ENCODE measurements at regions of chr9 and their contacts with region 1.

Region 1: DNA sequence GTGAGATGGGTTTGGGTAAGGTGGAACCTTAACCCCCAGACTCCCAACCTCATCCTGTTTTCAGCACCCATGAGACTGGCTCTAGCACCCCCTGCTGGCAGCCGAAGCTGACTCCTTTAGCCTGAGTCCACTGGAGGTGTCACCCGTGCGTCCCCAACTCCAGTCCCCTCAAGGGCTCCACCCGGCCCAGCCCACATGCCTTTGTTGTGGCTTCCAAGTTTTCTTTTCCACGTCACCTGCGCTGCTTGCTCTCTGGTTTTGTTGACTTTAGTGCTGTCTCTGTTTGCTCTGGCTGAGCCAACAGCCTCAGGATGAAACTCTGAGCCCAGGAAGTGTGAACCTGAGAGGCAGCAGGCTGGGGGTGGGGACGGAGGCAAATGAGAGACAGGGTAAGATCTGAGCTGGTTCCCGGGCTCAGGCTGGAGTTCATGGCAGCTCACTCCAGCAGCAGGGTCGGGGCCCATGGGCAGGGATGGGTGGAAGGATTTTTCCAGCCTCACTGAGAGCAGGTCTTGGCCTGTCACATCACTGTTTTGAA is 13.2 kb upstream of the AQP7 start:
- DNase-seq: peak; percentile 96 to 98
- H3K4me3 ChIP-seq: no peak overlapping the region
- H3K4me3 Mint-ChIP-seq: peak overlapping the region; percentile 45
- H3K27ac Mint-ChIP-seq: peak overlapping the region; percentile 89
- H3K4me1 ChIP-seq: peaks cover 44% of the 10 kb centered on the region
- H3K4me1 Mint-ChIP-seq: peaks cover 51% of the 10 kb centered on the region
- H3K27me3 ChIP-seq: no peaks in the 10 kb centered on the region
- H3K27me3 Mint-ChIP-seq: no peaks in the 10 kb centered on the region
- CTCF ChIP-seq: peak; percentile 75 to 91

Region 2: DNA sequence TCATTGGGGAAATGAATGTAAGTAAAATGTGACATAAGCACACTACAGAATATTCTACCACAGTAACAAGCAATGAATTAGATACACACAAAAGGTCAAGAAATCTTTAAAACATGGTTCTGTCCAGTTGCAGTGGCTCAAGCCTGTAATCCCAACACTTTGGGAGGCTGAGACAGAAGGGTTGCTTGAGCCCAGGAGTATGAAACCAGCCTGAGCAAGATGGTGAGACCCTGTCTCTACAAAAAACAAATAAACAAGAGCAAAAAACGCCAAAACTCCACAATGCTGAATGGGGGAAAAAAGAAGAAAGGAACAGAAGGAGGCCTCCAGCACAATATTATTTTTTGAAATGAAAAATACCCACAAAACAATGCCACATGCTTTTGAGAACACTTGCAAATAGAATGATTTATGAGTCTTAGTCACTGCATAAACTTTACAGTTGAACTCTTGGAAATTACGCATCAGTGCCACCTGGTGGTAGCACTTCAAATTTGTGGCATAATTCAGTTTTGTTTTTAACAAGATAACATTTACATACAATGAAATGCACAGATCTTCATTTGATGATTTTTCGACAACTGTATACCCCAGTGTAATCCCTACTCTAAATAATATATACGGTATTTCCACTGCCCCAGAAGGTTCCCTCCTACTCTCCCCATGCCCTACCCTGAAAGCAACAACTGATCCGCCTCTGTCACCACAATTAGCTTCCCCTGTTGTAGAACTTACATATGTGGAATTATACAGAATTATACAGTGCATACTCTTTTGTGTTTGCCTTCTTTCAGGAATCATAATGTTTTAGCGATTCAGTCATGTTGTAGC is 190.0 kb before region 1 on chr9:
- CTCF ChIA-PET with region 1: no interaction called
- POLR2A ChIA-PET with region 1: no interaction called
- intact Hi-C with region 1: loop called (anchors 1 kb)
- DNase-seq: peak; percentile 56 to 69
- H3K4me3 ChIP-seq: no peak overlapping the region
- H3K4me3 Mint-ChIP-seq: no peak overlapping the region
- H3K27ac Mint-ChIP-seq: no peak overlapping the region
- H3K4me1 ChIP-seq: peaks cover 14% of the 10 kb centered on the region
- H3K4me1 Mint-ChIP-seq: peaks cover 27% of the 10 kb centered on the region
- H3K27me3 ChIP-seq: no peaks in the 10 kb centered on the region
- H3K27me3 Mint-ChIP-seq: no peaks in the 10 kb centered on the region
- CTCF ChIP-seq: peak; percentile 62 to 73

Region 3: DNA sequence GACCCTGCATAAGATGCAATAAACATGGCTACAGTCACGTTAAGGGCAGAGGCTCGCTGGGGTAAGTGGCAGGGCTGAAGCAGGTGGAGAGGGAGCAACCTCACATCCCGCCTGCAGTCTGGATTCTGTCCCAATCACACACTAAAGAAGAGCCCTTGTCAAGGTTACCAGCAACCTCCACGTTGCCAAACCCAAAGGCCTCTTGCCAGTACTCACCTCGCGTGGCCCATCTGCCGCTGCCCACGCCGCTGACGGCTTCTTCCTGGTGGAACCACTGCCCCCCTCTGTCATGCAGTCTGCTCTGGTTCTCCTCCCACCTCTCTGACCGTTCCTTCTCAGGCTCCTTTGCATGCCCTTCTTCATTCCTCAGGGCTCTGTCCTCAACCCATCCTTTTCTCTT is 22.0 kb before region 1 on chr9:
- CTCF ChIA-PET with region 1: interaction called, 4 read pairs
- POLR2A ChIA-PET with region 1: no interaction called
- intact Hi-C with region 1: loop called (anchors 2 kb)
- DNase-seq: no peak
- H3K4me3 ChIP-seq: no peak overlapping the region
- H3K4me3 Mint-ChIP-seq: no peak overlapping the region
- H3K27ac Mint-ChIP-seq: no peak overlapping the region
- H3K4me1 ChIP-seq: peaks cover 37% of the 10 kb centered on the region
- H3K4me1 Mint-ChIP-seq: peaks cover 38% of the 10 kb centered on the region
- H3K27me3 ChIP-seq: no peaks in the 10 kb centered on the region
- H3K27me3 Mint-ChIP-seq: no peaks in the 10 kb centered on the region
- CTCF ChIP-seq: no peak

Region 4: GRCh38 chr9:33446946-33447798 is 31.6 kb after region 1 on chr9 and contains the start of gene AQP3:
- CTCF ChIA-PET with region 1: interaction called, 32 read pairs
- POLR2A ChIA-PET with region 1: interaction called, 4 read pairs
- intact Hi-C with region 1: loop called (anchors 1 kb)
- DNase-seq: peak; percentile 82 to 85
- H3K4me3 ChIP-seq: peak within 1 kb of the TSS; percentile 62
- H3K4me3 Mint-ChIP-seq: peak within 1 kb of the TSS; percentile 77
- H3K27ac Mint-ChIP-seq: peak within 1 kb of the TSS; percentile 62
- H3K4me1 ChIP-seq: peaks cover 49% of the 10 kb centered on the region
- H3K4me1 Mint-ChIP-seq: peaks cover 30% of the 10 kb centered on the region
- H3K27me3 ChIP-seq: no peaks in the 10 kb centered on the region
- H3K27me3 Mint-ChIP-seq: no peaks in the 10 kb centered on the region
- CTCF ChIP-seq: peak; percentile 33
- total RNA-seq, gene AQP3: 24.1 and 24.8 TPM in 2 replicates

Region 5: GRCh38 chr9:33452828-33453271 is 37.3 kb after region 1 on chr9:
- CTCF ChIA-PET with region 1: interaction called, 32 read pairs
- POLR2A ChIA-PET with region 1: no interaction called
- intact Hi-C with region 1: no loop called
- DNase-seq: peak; percentile 71 to 73
- H3K4me3 ChIP-seq: no peak overlapping the region
- H3K4me3 Mint-ChIP-seq: no peak overlapping the region
- H3K27ac Mint-ChIP-seq: no peak overlapping the region
- H3K4me1 ChIP-seq: peaks cover 24% of the 10 kb centered on the region
- H3K4me1 Mint-ChIP-seq: peaks cover 8% of the 10 kb centered on the region
- H3K27me3 ChIP-seq: no peaks in the 10 kb centered on the region
- H3K27me3 Mint-ChIP-seq: no peaks in the 10 kb centered on the region
- CTCF ChIP-seq: peak; percentile 62 to 70

Region 6: DNA sequence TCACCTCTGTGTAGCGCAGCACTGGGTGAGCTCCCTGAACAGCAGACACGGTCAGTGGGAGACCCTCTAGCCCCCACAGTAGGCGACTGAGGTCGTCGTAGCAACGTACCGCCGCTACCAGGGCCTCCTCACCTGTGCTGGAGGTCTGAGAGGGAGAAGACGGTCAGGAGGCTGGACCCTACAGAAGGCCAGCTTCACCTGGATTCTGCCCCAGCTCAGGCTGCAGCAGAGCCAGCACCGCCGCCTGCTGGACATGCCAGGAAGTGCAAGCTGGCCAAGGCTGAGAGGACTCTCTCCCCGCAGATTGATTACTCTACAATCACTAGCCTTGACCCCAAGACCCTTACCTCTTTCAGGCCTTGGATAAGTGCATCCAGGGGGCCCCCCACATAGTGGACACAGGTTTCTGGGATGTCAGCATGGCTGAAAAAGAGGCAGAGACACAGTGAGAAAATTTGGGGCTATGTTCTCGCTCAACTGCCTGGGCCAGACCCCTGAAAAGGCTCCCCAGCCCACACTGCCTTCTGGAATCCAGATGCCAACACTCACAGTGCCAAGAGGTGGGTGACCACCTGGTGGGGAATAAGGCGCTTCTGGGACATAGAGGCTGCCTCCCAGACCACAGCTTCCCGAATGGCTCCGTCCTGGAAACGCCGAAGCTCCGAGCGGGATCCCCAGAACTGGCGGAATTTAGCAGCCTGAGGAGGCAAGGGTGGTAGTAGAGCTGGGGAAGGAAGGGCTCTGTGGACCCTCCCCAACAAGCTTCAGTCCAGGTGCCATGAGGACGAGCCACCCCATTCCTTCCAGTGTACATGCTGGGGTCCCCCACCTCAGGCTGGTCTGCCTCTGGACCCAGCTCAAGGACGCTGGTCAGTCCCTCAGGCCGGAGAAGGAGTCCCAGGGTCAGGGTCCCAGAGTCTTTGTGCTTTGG is 51.3 kb after region 1 on chr9:
- CTCF ChIA-PET with region 1: interaction called, 25 read pairs
- POLR2A ChIA-PET with region 1: no interaction called
- intact Hi-C with region 1: loop called (anchors 2 kb)
- DNase-seq: peak; percentile 67 to 84
- H3K4me3 ChIP-seq: no peak overlapping the region
- H3K4me3 Mint-ChIP-seq: no peak overlapping the region
- H3K27ac Mint-ChIP-seq: no peak overlapping the region
- H3K4me1 ChIP-seq: peaks cover under 1% of the 10 kb centered on the region; the same call in 1 of the 2 replicates
- H3K4me1 Mint-ChIP-seq: peaks cover 7% of the 10 kb centered on the region
- H3K27me3 ChIP-seq: no peaks in the 10 kb centered on the region
- H3K27me3 Mint-ChIP-seq: no peaks in the 10 kb centered on the region
- CTCF ChIP-seq: peak; percentile 96 to 97

Region 7: DNA sequence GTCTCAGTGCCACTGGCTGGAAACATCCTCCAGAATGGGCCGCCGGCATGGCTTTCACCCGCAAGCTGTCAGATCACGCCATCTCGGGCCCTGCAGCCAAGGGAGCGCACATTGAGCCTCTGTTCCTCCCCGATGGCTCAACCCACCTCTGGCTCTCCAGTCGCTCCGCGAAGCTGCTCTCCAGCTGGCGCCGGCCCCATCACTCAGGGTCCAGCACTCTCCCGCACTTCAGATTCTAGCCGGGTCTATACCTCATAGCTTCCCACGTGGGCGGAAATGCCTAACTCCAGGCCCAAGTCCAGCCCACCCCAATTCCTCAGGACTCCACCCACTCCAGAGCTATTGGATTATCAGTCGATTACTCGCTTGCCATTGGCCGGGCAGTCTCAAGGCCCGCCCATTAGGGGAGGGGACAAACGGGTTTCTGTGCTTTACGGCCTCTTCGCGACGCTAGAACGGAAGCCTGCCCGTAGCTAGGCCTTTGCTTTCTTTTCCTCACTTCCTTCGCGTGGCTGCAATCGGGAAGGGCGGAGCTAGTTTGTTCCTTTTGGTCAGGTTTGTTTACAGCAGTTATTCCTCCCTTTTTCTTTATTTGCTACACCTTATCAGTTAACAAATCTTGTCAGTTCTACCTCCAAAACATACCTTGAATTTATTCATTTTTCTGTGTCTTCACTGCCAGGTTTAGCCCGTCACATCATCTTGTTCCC is 58.2 kb after region 1 on chr9 and contains the start of gene NOL6:
- CTCF ChIA-PET with region 1: interaction called, 18 read pairs
- POLR2A ChIA-PET with region 1: interaction called, 9 read pairs
- intact Hi-C with region 1: no loop called
- DNase-seq: peak; percentile 98 to 99
- H3K4me3 ChIP-seq: peak within 1 kb of the TSS; percentile 100
- H3K4me3 Mint-ChIP-seq: peak within 1 kb of the TSS; percentile 91
- H3K27ac Mint-ChIP-seq: peak within 1 kb of the TSS; percentile 88
- H3K4me1 ChIP-seq: peaks cover 8% of the 10 kb centered on the region; the same call in 1 of the 2 replicates
- H3K4me1 Mint-ChIP-seq: peaks cover 10% of the 10 kb centered on the region
- H3K27me3 ChIP-seq: no peaks in the 10 kb centered on the region
- H3K27me3 Mint-ChIP-seq: no peaks in the 10 kb centered on the region
- CTCF ChIP-seq: no peak
- total RNA-seq, gene NOL6: 47.2 and 52.1 TPM in 2 replicates

Region 8: GRCh38 chr9:33498387-33498786 is 82.8 kb after region 1 on chr9:
- CTCF ChIA-PET with region 1: no interaction called
- POLR2A ChIA-PET with region 1: no interaction called
- intact Hi-C with region 1: no loop called
- DNase-seq: no peak
- H3K4me3 ChIP-seq: no peak overlapping the region
- H3K4me3 Mint-ChIP-seq: no peak overlapping the region
- H3K27ac Mint-ChIP-seq: no peak overlapping the region
- H3K4me1 ChIP-seq: 0 out of 2 replicates have a peak, but pooled peaks cover 3% of the 10 kb centered on the region
- H3K4me1 Mint-ChIP-seq: peaks cover 8% of the 10 kb centered on the region
- H3K27me3 ChIP-seq: no peaks in the 10 kb centered on the region
- H3K27me3 Mint-ChIP-seq: no peaks in the 10 kb centered on the region
- CTCF ChIP-seq: peak; percentile 25 to 27

Measured in Caco-2 (cell line).